Activated CD8-positive, alpha-beta T cell treated with anti-CD3 and anti-CD28 coated beads for 36 hours (primary cell): ENCODE measurements at regions of chr9 and their contacts with region 1.

Region 1: GRCh38 chr9:89549031-89549644 is 51.2 kb upstream of the SEMA4D start:
- DNase-seq: peak; percentile 90
- ATAC-seq: peak; percentile 98
- H3K4me3 Mint-ChIP-seq: no peak overlapping the region
- H3K27ac Mint-ChIP-seq: peak overlapping the region; percentile 61
- H3K4me1 Mint-ChIP-seq: peaks cover 17% of the 10 kb centered on the region
- H3K27me3 Mint-ChIP-seq: no peaks in the 10 kb centered on the region
- CTCF ChIP-seq: peak; percentile 99

Region 2: DNA sequence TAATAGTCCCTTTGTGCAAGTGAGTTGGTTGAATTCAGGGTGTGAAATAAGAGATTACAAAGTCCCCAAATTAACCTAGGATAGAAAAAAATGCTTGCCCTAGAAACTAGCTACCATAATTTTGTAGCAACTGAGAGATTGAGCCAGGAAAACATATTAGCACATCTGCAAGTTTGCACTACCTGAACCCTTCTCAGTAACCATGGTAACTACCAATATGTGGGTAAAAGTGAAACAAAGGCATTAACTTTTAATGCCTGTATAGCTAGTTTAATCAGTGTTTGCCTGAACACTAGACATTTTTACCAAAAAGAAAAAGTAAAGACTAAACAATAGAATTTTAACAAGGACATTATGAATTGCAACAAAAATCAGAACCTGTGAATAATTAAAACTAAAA is 283.9 kb before region 1 on chr9:
- CTCF ChIA-PET with region 1: no interaction called
- POLR2A ChIA-PET with region 1: no interaction called
- intact Hi-C with region 1: no loop called
- DNase-seq: no peak
- ATAC-seq: no peak
- H3K4me3 Mint-ChIP-seq: no peak overlapping the region
- H3K27ac Mint-ChIP-seq: no peak overlapping the region
- H3K4me1 Mint-ChIP-seq: no peaks in the 10 kb centered on the region
- H3K27me3 Mint-ChIP-seq: peaks cover 6% of the 10 kb centered on the region
- CTCF ChIP-seq: no peak

Region 3: GRCh38 chr9:89410641-89411350 is 138.3 kb before region 1 on chr9:
- CTCF ChIA-PET with region 1: interaction called, 47 read pairs
- POLR2A ChIA-PET with region 1: no interaction called
- intact Hi-C with region 1: no loop called
- DNase-seq: peak; percentile 85
- ATAC-seq: peak; percentile 70
- H3K4me3 Mint-ChIP-seq: peak overlapping the region; percentile 40
- H3K27ac Mint-ChIP-seq: peak overlapping the region; percentile 95
- H3K4me1 Mint-ChIP-seq: peaks cover 95% of the 10 kb centered on the region
- H3K27me3 Mint-ChIP-seq: no peaks in the 10 kb centered on the region
- CTCF ChIP-seq: peak; percentile 20

Region 4: DNA sequence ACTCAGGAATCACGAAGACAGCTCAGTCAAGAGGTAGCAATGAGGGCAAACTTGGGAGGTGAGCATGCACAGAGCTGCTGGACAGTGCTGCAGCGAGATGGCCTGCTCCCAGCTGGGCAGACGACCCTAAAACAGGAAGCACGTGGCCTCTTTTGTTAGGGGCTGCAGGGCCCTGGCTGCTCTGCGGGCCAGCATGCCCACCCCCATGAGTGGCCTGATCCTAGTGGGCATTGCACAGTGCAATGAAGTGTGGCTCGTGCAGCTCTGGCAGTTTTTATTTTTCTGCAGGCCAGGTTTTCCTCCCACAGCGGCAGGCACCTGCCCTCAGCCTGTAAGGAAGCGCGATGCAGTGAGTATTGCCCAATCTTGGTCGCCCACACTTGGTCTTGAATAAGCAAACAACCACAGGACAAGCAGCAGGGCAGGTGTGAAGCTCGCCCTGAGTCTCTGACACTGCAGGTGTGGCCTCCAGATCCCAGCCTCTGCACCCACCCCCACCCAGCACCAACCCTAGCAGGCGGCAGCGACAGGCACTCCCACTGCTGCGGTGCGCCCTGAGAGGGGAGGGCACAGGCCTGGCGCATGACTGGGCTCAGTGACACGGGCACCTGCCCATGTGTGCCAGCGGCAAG is 112.0 kb before region 1 on chr9:
- CTCF ChIA-PET with region 1: interaction called, 84 read pairs
- POLR2A ChIA-PET with region 1: interaction called, 3 read pairs
- intact Hi-C with region 1: no loop called
- DNase-seq: peak; percentile 79
- ATAC-seq: peak; percentile 71
- H3K4me3 Mint-ChIP-seq: no peak overlapping the region
- H3K27ac Mint-ChIP-seq: peak overlapping the region; percentile 82
- H3K4me1 Mint-ChIP-seq: peaks cover 86% of the 10 kb centered on the region
- H3K27me3 Mint-ChIP-seq: no peaks in the 10 kb centered on the region
- CTCF ChIP-seq: no peak

Region 5: DNA sequence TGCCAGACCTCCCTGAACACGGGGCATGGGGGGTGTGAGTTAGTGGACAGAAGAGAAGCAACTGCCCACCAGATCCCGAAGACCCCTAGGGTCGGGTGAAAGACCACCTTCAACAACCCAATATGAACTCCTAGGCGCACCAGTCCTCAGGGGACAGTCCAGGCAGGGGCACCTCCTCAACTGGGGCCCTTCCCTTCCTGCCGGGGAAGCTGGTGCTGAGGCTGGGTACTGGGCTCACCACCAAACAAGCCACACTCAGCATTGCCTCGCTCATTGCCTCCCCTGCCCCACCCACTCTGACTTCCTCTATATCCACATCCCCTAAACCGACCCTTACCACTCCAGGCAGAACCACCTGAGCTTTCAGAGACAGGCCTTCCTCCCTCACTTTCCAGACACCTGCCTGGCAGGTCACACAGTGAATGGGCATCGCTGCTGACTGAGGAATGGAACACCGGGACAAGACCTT is 93.7 kb before region 1 on chr9:
- CTCF ChIA-PET with region 1: interaction called, 22 read pairs
- POLR2A ChIA-PET with region 1: interaction called, 5 read pairs
- intact Hi-C with region 1: no loop called
- DNase-seq: peak; percentile 55
- ATAC-seq: peak; percentile 10
- H3K4me3 Mint-ChIP-seq: peak overlapping the region; percentile 62
- H3K27ac Mint-ChIP-seq: peak overlapping the region; percentile 95
- H3K4me1 Mint-ChIP-seq: peaks cover 94% of the 10 kb centered on the region
- H3K27me3 Mint-ChIP-seq: no peaks in the 10 kb centered on the region
- CTCF ChIP-seq: no peak

Region 6: GRCh38 chr9:89483592-89484522 is 65.3 kb before region 1 on chr9:
- CTCF ChIA-PET with region 1: interaction called, 32 read pairs
- POLR2A ChIA-PET with region 1: interaction called, 25 read pairs
- intact Hi-C with region 1: no loop called
- DNase-seq: peak; percentile 91
- ATAC-seq: peak; percentile 75
- H3K4me3 Mint-ChIP-seq: peak overlapping the region; percentile 86
- H3K27ac Mint-ChIP-seq: peak overlapping the region; percentile 93
- H3K4me1 Mint-ChIP-seq: peaks cover 86% of the 10 kb centered on the region
- H3K27me3 Mint-ChIP-seq: peaks cover 3% of the 10 kb centered on the region
- CTCF ChIP-seq: no peak

Region 7: DNA sequence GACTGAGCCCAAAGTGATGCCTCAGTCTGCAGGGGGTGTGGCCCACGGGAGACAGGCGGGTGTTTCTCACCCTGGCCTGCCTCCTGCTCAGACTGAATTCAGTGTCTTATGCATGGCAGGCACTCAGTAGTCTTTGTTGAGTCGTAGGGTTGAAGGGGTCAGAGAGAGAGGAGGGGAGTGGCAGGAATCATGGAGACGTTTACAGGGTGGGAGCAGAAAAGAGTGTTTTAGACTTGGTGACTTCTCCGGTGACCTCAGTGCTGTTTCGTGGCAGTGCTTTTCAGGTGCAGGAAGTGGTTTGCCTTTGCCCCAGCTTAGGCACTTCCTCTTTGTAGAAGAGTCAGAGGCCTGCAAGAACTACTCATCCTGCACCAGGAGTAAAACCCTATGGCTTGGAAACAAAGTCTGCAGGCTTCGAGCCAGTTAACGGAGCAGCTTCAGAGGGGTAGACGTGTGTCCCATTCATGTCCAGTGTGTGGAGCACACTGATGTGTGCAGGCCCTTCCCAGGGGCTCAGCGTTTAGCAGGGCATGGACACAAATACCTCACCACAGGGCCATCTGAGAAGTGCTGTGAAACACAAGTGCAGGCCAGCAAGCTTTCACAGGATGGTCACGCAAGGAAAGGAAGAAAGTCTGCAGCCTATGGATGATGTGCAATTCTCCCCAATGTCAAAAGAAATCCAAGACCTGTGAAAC is 26.7 kb before region 1 on chr9:
- CTCF ChIA-PET with region 1: interaction called, 51 read pairs
- POLR2A ChIA-PET with region 1: interaction called, 6 read pairs
- intact Hi-C with region 1: no loop called
- DNase-seq: peak; percentile 88
- ATAC-seq: peak; percentile 88
- H3K4me3 Mint-ChIP-seq: peak overlapping the region; percentile 64
- H3K27ac Mint-ChIP-seq: peak overlapping the region; percentile 97
- H3K4me1 Mint-ChIP-seq: peaks cover 90% of the 10 kb centered on the region
- H3K27me3 Mint-ChIP-seq: no peaks in the 10 kb centered on the region
- CTCF ChIP-seq: no peak